ENCODE measurements at regions of chr11 and their contacts with region 1.

Region 1: GRCh38 chr11:43868852-43869567 is 11.6 kb upstream of the ALKBH3 start:
- DNase-seq: peak; percentile 66
- ATAC-seq: peak; percentile 95
- H3K4me3 Mint-ChIP-seq: peak overlapping the region; percentile 31
- H3K27ac Mint-ChIP-seq: peak overlapping the region; percentile 82
- H3K4me1 Mint-ChIP-seq: peaks cover 30% of the 10 kb centered on the region
- H3K27me3 Mint-ChIP-seq: peaks cover 19% of the 10 kb centered on the region
- CTCF ChIP-seq: no peak

Region 2: DNA sequence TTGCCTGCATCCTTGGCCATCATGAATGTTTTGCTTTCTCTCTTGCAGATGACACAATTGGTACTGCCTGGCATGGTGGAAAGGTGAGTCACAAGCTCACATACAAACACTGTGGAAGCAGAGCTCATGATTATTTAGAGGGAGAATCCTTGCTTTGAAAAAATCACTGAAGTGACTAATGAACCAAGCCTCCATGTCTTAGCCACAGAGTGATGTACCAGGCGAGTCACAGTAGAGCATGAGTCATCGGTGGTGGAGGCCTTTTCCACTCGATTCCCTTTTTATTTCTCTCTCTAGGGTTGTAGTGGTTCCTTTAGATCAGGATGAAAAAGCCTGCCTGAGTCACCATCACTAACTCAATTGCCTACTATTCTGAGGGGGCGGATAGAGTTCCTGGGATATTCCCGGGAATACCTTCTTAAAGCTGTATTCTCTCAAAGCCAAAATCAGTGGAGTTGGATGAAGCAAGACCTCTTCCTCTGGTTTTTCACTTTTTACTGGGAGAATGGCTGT is 38.0 kb before region 1 on chr11:
- CTCF ChIA-PET with region 1: interaction called, 4 read pairs
- POLR2A ChIA-PET with region 1: interaction called, 4 read pairs
- intact Hi-C with region 1: loop called (anchors 5 kb)
- DNase-seq: peak; percentile 76
- ATAC-seq: peak; percentile 100
- H3K4me3 Mint-ChIP-seq: no peak overlapping the region
- H3K27ac Mint-ChIP-seq: peak overlapping the region; percentile 80
- H3K4me1 Mint-ChIP-seq: peaks cover 19% of the 10 kb centered on the region
- H3K27me3 Mint-ChIP-seq: no peaks in the 10 kb centered on the region
- CTCF ChIP-seq: no peak